ENCODE measurements at regions of chr10 and their contacts with region 1.

Region 1: DNA sequence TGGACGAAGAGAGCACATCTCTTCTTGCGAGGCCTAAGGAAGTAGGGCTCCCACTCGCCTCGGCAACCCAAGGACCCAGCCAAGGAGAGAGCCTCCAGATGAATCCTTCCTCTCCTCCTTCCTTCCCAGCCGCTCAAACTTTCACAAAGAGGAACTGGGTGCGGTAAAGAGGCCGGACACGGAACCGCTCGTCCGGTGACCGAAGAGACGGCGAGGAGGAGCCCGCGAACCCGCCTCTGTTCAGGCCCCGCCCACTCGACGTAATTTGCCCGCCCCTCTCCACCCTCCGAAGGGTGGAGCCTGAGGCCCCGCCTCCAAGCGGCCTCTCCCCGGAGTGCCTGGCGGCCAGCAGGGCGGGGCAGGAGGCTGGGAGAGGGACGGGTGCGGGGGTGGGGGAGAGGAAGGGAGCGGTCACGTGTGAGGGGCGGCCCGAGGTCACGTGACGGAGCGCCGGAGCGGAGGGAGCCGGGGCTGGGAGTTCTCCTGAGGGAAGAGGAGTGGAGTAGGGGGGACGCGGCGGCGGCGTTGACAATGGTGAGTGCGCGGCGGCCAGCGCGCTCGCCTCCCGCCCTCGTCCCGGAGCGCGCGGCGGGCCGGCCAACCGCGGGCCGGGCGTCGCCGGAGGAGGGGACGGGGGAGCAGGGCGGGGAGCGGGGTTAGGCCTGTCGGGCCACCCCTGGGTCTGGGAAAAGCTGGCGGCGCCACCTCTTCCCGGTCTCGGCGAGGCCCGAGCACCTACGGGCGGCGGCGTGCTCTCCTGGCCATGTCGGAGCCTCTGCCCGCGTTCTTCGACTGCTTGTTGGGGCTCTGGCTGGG is at the start of gene VPS26A:
- DNase-seq: peak; percentile 98
- H3K4me3 Mint-ChIP-seq: peak within 1 kb of the TSS; percentile 94
- H3K27ac Mint-ChIP-seq: peak within 1 kb of the TSS; percentile 94
- H3K4me1 Mint-ChIP-seq: peaks cover 6% of the 10 kb centered on the region
- H3K27me3 Mint-ChIP-seq: no peaks in the 10 kb centered on the region
- CTCF ChIP-seq: peak; percentile 21
- total RNA-seq, gene VPS26A: 63.7 and 80.9 TPM in 2 replicates

Region 2: DNA sequence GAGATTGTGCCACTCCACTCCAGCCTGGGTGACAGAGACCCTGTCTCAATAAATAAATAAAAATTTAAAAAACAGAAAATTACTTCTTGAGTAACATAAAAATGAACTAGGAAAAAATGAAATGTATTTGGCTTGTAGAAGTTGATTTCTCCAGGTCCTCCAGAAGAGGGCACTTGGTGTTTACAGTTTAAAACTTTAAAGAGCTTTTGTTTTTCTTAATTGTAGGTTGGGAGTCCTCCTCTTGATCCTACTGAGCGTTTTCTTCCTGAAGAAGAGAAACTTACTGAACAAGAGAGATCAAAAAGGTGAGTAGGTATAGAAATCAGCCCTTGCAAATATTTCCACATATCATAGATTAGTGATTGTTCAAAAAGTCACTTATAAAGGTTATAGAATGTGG is 119.1 kb before region 1 on chr10:
- CTCF ChIA-PET with region 1: no interaction called
- POLR2A ChIA-PET with region 1: interaction called, 8 read pairs
- intact Hi-C with region 1: loop called (anchors 1 kb)
- DNase-seq: peak; percentile 47
- H3K4me3 Mint-ChIP-seq: no peak overlapping the region
- H3K27ac Mint-ChIP-seq: no peak overlapping the region
- H3K4me1 Mint-ChIP-seq: no peaks in the 10 kb centered on the region
- H3K27me3 Mint-ChIP-seq: no peaks in the 10 kb centered on the region
- CTCF ChIP-seq: peak; percentile 57

Region 3: GRCh38 chr10:69179743-69180524 is 56.0 kb after region 1 on chr10 and contains the start of gene SUPV3L1:
- CTCF ChIA-PET with region 1: interaction called, 3 read pairs
- POLR2A ChIA-PET with region 1: interaction called, 15 read pairs
- intact Hi-C with region 1: no loop called
- DNase-seq: peak; percentile 97
- H3K4me3 Mint-ChIP-seq: peak within 1 kb of the TSS; percentile 92
- H3K27ac Mint-ChIP-seq: peak within 1 kb of the TSS; percentile 100
- H3K4me1 Mint-ChIP-seq: peaks cover 33% of the 10 kb centered on the region
- H3K27me3 Mint-ChIP-seq: no peaks in the 10 kb centered on the region
- CTCF ChIP-seq: no peak
- total RNA-seq, gene SUPV3L1: 65.1 and 73.6 TPM in 2 replicates

Region 4: DNA sequence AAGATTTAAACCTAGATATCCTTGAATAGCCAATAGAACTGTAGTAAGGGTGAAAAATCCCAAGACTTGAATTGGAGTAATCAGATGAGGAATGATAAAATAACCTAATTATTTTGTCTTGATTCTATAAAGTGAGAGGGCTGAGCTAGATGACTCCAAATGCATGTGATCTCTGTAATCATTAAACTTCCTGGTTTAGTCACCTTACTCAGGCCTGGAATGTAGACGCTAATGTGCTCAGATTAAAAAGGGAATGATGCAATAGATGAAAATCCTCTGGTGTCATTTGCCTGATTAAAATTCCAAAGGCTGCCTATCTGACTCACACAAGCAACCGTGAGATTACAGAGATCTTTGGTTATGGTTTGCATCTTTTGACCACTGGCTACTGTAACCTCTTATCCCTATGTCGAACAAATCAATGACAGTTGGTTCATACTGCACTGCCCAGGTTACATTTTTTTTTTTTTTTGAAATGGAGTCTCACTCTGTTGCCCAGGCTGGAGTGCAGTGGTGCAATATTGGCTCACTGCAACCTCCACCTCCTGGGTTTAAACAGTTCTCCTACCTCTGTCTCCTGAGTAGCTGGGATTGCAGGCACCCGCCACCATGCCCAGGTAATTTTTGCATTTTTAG is 93.3 kb after region 1 on chr10:
- CTCF ChIA-PET with region 1: no interaction called
- POLR2A ChIA-PET with region 1: interaction called, 6 read pairs
- intact Hi-C with region 1: loop called (anchors 5 kb)
- DNase-seq: peak; percentile 86
- H3K4me3 Mint-ChIP-seq: no peak overlapping the region
- H3K27ac Mint-ChIP-seq: peak overlapping the region; percentile 80
- H3K4me1 Mint-ChIP-seq: peaks cover 10% of the 10 kb centered on the region
- H3K27me3 Mint-ChIP-seq: no peaks in the 10 kb centered on the region
- CTCF ChIP-seq: no peak

Measured in MCF 10A (cell line).